Left ventricle myocardium inferior (tissue), 1 donor: ENCODE measurements at regions of chr17 and their contacts with region 1.

Region 1: DNA sequence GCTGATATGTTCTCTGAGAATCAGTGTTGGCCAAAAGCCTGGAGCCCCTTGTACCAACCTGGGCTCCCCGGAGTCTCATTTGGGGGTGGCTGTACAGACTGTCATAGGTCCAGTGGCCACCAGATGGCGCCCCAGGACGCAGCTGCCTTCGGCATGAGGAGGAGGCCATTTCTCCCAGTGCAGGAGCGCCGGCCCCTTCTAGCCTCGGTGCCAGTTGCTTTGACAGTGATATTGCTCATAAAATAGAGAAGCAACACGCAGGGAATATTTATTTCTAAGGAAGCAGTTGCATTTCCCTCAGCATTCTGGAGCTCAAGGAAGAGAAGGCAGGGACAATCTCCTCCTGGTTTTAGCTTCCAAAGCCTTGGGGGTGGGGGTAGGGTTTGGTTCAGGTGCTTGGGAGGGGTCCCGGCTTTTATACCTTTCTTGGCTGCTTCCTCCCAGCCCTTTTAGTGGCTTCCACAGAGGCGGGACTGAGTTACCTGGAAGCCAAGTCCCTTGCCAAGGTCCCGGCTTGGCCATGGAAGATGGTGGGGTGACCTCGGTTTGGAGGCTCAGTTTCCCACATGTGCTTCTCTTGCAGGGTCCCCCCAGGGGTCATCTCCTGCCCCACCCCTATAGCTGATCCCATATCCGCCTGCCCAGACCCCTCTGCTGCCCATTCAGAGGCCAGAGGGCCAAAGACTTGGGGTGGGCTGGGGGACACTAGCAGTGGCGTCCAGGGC is 117.8 kb upstream of the CDC42EP4 start:
- DNase-seq: peak; percentile 85
- H3K4me3 ChIP-seq: no peak overlapping the region
- H3K27ac ChIP-seq: no peak overlapping the region
- H3K4me1 ChIP-seq: peaks cover 7% of the 10 kb centered on the region
- H3K27me3 ChIP-seq: peaks cover 8% of the 10 kb centered on the region
- CTCF ChIP-seq: peak; percentile 99

Region 2: GRCh38 chr17:73192894-73193701 is 236.5 kb before region 1 on chr17 and contains the start of gene COG1:
- intact Hi-C with region 1: no loop called
- DNase-seq: peak; percentile 88
- H3K4me3 ChIP-seq: peak within 1 kb of the TSS; percentile 96
- H3K27ac ChIP-seq: peak within 1 kb of the TSS; percentile 91
- H3K4me1 ChIP-seq: peaks cover 35% of the 10 kb centered on the region
- H3K27me3 ChIP-seq: no peaks in the 10 kb centered on the region
- CTCF ChIP-seq: no peak
- total RNA-seq, gene COG1: 44.7 TPM

Region 3: GRCh38 chr17:73501431-73501830 is 71.8 kb after region 1 on chr17:
- intact Hi-C with region 1: no loop called
- DNase-seq: no peak
- H3K4me3 ChIP-seq: no peak overlapping the region
- H3K27ac ChIP-seq: no peak overlapping the region
- H3K4me1 ChIP-seq: peaks cover 7% of the 10 kb centered on the region
- H3K27me3 ChIP-seq: peaks cover 20% of the 10 kb centered on the region
- CTCF ChIP-seq: no peak

Region 4: GRCh38 chr17:73710095-73710592 is 280.5 kb after region 1 on chr17:
- intact Hi-C with region 1: loop called (anchors 10 kb)
- DNase-seq: peak; percentile 55
- H3K4me3 ChIP-seq: no peak overlapping the region
- H3K27ac ChIP-seq: no peak overlapping the region
- H3K4me1 ChIP-seq: peaks cover 6% of the 10 kb centered on the region
- H3K27me3 ChIP-seq: peaks cover 74% of the 10 kb centered on the region
- CTCF ChIP-seq: peak; percentile 83

Region 5: GRCh38 chr17:74176546-74177001 is 747.0 kb after region 1 on chr17:
- intact Hi-C with region 1: loop called (anchors 5 kb)
- DNase-seq: peak; percentile 29
- H3K4me3 ChIP-seq: no peak overlapping the region
- H3K27ac ChIP-seq: no peak overlapping the region
- H3K4me1 ChIP-seq: no peaks in the 10 kb centered on the region
- H3K27me3 ChIP-seq: peaks cover 81% of the 10 kb centered on the region
- CTCF ChIP-seq: peak; percentile 87